A549 (cell line): ENCODE measurements at regions of chr20 and their contacts with region 1.

Region 1: DNA sequence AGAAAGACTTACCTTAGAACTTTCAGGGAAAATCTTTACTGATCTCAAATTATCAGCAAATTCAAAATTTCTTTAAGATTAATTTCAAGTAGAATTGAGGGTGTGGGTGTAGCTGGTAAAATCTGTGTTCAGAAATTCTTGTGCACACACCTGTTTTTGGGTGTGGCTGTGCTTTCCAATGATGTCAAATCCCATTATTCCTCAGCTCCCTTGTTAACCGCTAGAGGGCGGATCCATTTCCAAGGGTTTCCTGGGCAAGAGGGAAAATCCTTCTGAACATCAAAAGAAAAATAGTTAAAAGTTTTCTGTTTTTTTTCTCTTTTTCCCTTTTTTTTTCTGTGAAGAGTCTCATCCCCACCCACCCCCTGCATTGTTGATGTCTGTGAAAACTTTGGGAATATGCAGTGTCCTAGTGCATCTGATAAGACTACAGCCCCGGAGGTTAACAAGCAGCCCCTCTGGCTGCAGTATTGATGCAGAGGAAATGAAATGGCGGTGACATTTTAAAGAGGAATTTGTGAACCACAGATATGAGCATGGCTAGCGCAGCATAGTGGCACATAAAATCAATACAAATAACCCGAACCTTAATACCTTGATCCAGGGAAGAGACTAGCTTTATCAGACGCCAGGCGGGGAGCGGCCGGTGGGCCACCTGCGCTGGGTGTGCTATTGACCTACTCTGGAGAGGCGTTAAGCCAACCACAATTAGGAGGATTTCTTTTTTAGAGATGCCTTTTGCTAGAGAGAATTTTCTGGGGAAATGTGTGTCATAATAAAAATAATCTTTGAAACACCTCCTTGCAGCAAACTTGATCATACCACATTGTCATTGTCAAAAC is 130.9 kb downstream of the FOXA2 start:
- DNase-seq: peak; percentile 70 to 77
- ATAC-seq: peak in 1 of 2 experiments; percentile 75; a peak in 3 of 6 replicates
- H3K4me3 ChIP-seq: no peak overlapping the region
- H3K27ac ChIP-seq: peak overlapping the region in 1 of 2 experiments; percentile 43; a peak in 3 of 6 replicates
- H3K4me1 ChIP-seq: peaks cover 8% of the 10 kb centered on the region; the same call in 2 of the 3 replicates
- CTCF ChIP-seq: peak; percentile 82
- EP300 ChIP-seq: no peak
- POLR2A ChIP-seq: no peak
- RAD21 ChIP-seq: peak; percentile 76 to 78

Region 2: DNA sequence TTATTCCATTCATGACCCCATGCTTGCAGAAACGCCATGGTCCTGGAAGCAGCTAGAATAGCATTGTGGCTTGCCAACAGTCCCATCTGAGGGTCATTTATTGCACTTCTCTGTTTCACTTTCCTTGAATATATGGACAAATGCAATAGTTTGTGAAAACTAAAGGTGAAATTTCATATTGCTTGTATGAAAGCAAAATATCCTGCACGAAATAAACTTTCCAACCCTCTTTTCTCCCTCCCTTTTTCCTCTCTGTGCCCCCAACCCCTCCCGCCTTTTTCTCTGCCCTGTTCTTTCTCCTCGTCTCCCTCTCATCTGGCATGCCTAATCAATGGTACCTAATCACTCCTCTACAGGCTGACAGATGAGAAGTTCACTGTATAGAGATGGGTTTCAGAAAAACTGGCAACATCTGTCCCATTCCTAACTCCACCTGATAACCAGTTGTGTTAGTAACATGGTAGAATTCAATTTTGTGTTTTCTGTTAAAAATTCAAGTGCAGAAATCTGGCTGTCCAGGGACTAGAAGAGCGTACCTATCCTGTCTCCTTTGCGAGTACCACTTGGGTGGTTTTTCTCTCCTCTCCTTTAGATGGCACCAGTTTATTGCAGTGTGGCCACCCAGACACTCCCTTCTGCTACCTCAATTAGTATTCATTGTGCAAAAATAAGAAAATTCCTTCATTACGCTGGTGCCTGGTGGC is 67.7 kb before region 1 on chr20:
- CTCF ChIA-PET with region 1: interaction called, 21 read pairs
- POLR2A ChIA-PET with region 1: no interaction called
- DNase-seq: peak; percentile 64 to 74
- ATAC-seq: peak; percentile 73 to 89; a peak in 5 of 6 replicates
- H3K4me3 ChIP-seq: no peak overlapping the region
- H3K27ac ChIP-seq: peak overlapping the region; percentile 57 to 67
- H3K4me1 ChIP-seq: peaks cover 54% of the 10 kb centered on the region
- CTCF ChIP-seq: peak; percentile 90
- EP300 ChIP-seq: no peak
- POLR2A ChIP-seq: no peak
- RAD21 ChIP-seq: peak; percentile 99 to 100

Region 3: GRCh38 chr20:22411627-22412450 is 41.6 kb before region 1 on chr20:
- CTCF ChIA-PET with region 1: interaction called, 14 read pairs
- POLR2A ChIA-PET with region 1: no interaction called
- DNase-seq: peak; percentile 97 to 99
- ATAC-seq: peak; percentile 96 to 98
- H3K4me3 ChIP-seq: 0 out of 3 replicates have a peak overlapping the region, but pooled peaks have one; percentile 12
- H3K27ac ChIP-seq: peak overlapping the region; percentile 97 to 98
- H3K4me1 ChIP-seq: peaks cover 62% of the 10 kb centered on the region
- CTCF ChIP-seq: no peak
- EP300 ChIP-seq: peak; percentile 76 to 91
- POLR2A ChIP-seq: no peak
- RAD21 ChIP-seq: peak; percentile 44 to 52; a peak in 4 of 5 replicates

Region 4: GRCh38 chr20:22430154-22430745 is 23.2 kb before region 1 on chr20:
- CTCF ChIA-PET with region 1: interaction called, 29 read pairs
- POLR2A ChIA-PET with region 1: no interaction called
- DNase-seq: peak; percentile 88 to 92
- ATAC-seq: peak; percentile 88 to 90
- H3K4me3 ChIP-seq: peak overlapping the region; percentile 9; the same call in 2 of the 3 replicates
- H3K27ac ChIP-seq: peak overlapping the region; percentile 83 to 90
- H3K4me1 ChIP-seq: peaks cover 54% of the 10 kb centered on the region
- CTCF ChIP-seq: no peak; the same call in 2 of the 3 replicates
- EP300 ChIP-seq: peak in 1 of 2 experiments; percentile 58; a peak in 1 of 5 replicates
- POLR2A ChIP-seq: 0 out of 2 replicates have a peak, but pooled peaks have one; percentile 10
- RAD21 ChIP-seq: peak; percentile 28 to 48; a peak in 3 of 5 replicates

Region 5: GRCh38 chr20:22438932-22439331 is 14.5 kb before region 1 on chr20:
- CTCF ChIA-PET with region 1: interaction called, 21 read pairs
- POLR2A ChIA-PET with region 1: no interaction called
- DNase-seq: peak in 1 of 2 experiments; percentile 51
- ATAC-seq: peak; percentile 73 to 95
- H3K4me3 ChIP-seq: no peak overlapping the region
- H3K27ac ChIP-seq: peak overlapping the region in 1 of 2 experiments; percentile 39; a peak in 2 of 6 replicates
- H3K4me1 ChIP-seq: peaks cover 16% of the 10 kb centered on the region
- CTCF ChIP-seq: no peak
- EP300 ChIP-seq: no peak
- POLR2A ChIP-seq: no peak
- RAD21 ChIP-seq: peak in 1 of 2 experiments; percentile 28; a peak in 1 of 5 replicates

Region 6: DNA sequence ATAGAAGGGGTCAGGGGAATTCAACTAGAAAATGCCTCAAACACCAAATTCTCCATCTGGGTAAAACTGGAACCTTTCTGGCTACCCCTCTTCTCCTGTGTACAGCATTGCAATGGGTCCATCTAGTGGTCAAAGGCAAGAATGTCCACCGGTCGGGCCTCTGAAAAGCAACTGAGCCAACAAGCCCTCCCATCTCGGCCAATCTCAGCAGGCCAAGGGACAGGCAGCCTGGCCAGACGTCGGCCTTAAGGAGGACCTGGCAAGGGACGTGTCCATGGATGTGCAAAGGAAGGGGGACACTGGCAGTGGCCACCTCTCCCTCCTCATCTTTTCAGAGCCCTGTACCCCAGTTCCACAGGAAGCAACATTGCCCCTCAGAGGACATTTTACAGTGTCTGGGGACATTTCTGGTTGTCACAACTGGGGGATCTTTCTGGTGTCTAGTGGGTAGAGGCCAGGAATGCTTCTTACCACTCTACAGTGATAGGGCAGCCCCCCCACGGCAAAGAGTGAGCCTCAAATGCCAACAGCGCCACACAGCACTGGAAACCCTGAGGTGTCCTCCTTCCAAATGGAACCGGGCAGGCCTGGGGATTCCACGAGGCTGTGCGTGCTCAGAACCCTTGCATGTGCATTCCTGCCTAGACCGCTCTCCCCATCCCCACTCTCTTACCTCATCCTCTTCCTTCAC is 230.8 kb after region 1 on chr20:
- CTCF ChIA-PET with region 1: interaction called, 15 read pairs
- POLR2A ChIA-PET with region 1: no interaction called
- DNase-seq: peak; percentile 71 to 85
- ATAC-seq: peak; percentile 76 to 92
- H3K4me3 ChIP-seq: no peak overlapping the region
- H3K27ac ChIP-seq: peak overlapping the region; percentile 41 to 66; a peak in 5 of 6 replicates
- H3K4me1 ChIP-seq: peaks cover 30% of the 10 kb centered on the region
- CTCF ChIP-seq: peak; percentile 98
- EP300 ChIP-seq: no peak
- POLR2A ChIP-seq: no peak
- RAD21 ChIP-seq: peak; percentile 100

Region 7: GRCh38 chr20:22698259-22698842 is 244.9 kb after region 1 on chr20:
- CTCF ChIA-PET with region 1: no interaction called
- POLR2A ChIA-PET with region 1: no interaction called
- DNase-seq: no peak
- ATAC-seq: no peak
- H3K4me3 ChIP-seq: no peak overlapping the region
- H3K27ac ChIP-seq: peak overlapping the region; percentile 16 to 54; a peak in 2 of 6 replicates
- H3K4me1 ChIP-seq: peaks cover 14% of the 10 kb centered on the region; the same call in 2 of the 3 replicates
- CTCF ChIP-seq: no peak
- EP300 ChIP-seq: no peak
- POLR2A ChIP-seq: no peak
- RAD21 ChIP-seq: no peak